AG04449 (cell line): ENCODE measurements at regions of chr2 and their contacts with region 1.

Region 1: DNA sequence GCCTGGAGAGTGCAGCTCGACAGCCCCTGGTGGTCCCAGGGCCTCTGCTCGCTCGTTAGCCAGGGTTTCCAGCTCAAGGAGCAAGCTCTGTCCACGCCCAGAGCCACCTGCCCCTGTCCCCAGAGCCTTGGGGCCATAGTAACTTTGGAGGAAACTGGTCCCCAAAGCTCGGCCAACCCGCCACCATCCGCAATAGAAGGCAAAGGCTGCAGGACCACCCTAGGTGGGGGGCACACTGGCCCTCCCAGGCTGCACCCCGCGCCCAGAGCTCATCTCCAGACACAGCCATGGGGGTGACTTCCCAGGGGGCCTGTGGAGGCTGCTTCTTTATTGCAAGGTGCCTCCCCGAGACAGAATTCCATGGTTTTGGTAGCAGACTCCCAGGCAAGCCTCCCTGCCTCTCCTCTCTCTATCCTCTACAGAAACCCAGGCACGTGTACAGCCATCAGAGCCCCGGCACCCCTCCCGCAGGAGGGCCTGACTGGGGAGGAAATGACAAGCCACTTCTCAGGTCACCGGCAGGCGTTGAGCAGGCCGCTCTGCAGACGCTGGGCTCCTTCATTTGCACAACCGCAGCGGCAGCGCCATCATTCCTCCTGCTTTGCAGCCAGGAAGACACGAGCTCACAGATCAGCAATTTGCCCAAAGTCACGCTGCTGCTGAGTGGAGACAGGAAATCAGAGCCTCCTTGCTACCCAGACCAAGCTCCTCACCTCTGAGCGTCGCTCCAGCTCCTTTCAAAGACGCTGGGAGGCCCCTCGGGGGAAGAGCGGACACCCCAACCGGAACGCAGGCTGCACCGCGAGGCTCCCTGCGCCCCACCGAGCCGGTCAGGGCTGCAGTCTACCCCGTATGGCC is 80.2 kb downstream of the NDUFA10 start:
- DNase-seq: no peak
- H3K4me3 ChIP-seq: no peak overlapping the region
- CTCF ChIP-seq: no peak

Region 2: DNA sequence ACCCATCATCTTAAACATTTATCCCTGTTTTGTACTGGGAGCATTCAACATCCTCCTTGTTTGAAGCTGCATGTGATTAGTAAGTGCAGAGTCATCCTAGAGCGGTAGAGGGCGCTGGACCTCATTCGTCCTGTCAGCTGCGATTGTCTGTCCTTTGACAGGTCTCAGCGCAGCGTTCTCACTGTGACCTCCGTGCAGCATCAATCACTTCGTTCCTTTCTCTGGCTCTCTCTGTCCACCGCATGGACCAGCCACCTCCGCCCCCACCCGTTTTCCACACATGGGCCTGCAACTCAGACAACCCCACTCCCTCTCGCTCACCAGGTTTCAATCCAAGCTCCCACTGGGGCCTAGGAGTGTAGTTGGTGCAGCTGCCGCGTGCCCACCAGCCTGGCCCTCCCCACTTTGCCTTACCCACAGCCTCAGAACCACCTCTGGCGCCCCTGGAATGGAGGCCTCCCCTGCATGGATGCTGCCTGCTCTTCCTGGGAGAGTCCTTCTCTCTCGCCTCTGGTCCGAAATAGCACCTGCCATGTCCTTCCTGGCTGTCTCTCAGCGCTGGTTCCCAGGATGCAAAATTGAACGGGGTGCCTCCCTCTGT is 10.3 kb before region 1 on chr2:
- CTCF ChIA-PET with region 1: interaction called, 38 read pairs
- POLR2A ChIA-PET with region 1: no interaction called
- DNase-seq: no peak
- H3K4me3 ChIP-seq: no peak overlapping the region
- CTCF ChIP-seq: peak; percentile 62